HAP-1 (cell line): ENCODE measurements at regions of chr5 and their contacts with region 1.

Region 1: GRCh38 chr5:150458819-150459557 is 9.4 kb upstream of the RPS14 start:
- DNase-seq: peak; percentile 49 to 95
- H3K4me3 ChIP-seq: peak overlapping the region; percentile 12; the same call in 1 of the 2 replicates
- H3K4me1 ChIP-seq: peaks cover 3% of the 10 kb centered on the region; the same call in 1 of the 2 replicates
- H3K27me3 ChIP-seq: no peaks in the 10 kb centered on the region

Region 2: DNA sequence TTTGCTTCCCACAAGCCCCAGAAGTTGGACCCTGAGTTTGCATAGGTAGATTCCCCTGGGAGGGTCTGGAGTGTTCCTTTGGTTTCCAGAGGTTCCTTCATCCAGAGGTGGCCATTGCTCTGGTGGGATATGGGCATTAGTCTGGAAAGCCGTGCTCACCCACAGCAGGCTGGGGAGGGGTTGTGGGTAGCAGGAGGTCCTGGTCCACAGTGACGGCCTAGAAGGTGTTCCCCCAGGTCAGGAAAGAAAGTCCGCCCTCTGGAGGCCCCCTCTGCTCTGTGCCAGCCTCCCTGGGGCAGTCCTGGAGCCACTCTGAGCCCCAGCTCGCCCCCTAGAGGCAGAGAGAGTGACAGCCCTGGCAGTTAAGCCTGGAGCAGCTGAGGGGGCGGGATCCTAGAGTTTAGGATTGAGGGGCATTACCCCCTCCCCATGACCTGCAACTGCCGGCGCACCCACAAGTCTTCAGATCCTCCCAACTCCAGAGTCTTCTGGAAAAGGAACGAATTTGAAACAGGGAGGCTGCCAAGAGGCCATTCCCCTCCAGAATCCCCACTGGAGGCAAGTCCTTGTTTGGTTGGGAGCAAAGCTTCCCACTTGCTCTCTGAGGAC is 85.7 kb after region 1 on chr5:
- in situ Hi-C with region 1: loop called (anchors 5 kb)
- DNase-seq: peak; percentile 60 to 91
- H3K4me3 ChIP-seq: no peak overlapping the region
- H3K4me1 ChIP-seq: no peaks in the 10 kb centered on the region
- H3K27me3 ChIP-seq: no peaks in the 10 kb centered on the region